HEK293 (cell line): ENCODE measurements at regions of chr1 and their contacts with region 1.

Region 1: DNA sequence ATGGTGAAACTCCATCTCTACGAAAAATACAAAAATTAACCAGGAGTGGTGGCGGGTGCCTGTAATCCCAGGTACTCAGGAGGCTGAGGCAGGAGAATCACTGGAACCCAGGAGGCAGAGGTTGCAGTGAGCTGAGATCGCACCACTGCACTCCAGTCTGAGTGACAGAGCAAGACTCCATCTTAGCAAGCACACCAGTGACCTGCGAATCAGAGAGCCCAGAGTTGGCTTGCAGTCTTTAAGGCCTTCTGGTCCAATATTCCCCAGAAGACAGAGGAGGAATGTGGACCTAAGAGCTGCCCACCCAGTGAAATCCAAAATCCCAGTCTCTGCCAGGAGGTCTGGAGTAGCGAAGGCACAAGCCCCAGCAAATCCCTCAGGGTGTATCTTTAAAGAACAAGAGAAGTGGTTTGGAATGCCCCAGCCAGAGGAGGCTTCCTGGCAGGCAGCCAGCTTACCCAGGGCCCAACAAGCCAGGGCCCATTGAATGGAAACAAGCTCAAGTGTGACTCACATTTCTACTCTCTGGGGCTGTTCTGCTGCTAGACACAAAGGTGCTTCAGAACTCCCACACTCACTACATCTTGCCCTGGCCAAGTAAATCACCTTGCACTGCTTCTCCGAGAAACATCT is 23.9 kb downstream of the GPR161 start:
- H3K4me3 ChIP-seq: no peak overlapping the region
- H3K27ac ChIP-seq: peak overlapping the region; percentile 4
- H3K4me1 ChIP-seq: peaks cover 3% of the 10 kb centered on the region; the same call in 1 of the 2 replicates
- CTCF ChIP-seq: no peak

Region 2: DNA sequence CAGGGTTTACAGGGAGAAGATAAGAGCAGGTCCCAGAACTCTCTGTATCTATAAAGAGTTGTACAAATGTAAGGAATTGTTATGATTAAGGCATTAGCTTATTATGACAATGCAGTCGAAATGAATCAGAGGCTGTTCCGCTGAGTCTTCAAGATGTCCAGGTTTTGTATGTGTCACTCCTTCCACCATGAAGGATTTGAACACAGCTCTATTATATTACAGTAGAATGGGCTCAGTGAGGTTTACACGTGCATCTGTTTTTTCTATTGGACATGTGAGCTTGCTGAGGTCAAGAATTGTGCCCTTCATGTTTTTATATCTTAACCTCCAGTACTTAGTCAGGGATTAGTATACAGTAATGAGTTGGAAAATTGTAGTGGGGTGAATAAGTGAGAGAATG is 304.7 kb before region 1 on chr1:
- CTCF ChIA-PET with region 1: no interaction called
- POLR2A ChIA-PET with region 1: no interaction called
- H3K4me3 ChIP-seq: no peak overlapping the region
- H3K27ac ChIP-seq: no peak overlapping the region
- H3K4me1 ChIP-seq: no peaks in the 10 kb centered on the region
- CTCF ChIP-seq: no peak

Region 3: DNA sequence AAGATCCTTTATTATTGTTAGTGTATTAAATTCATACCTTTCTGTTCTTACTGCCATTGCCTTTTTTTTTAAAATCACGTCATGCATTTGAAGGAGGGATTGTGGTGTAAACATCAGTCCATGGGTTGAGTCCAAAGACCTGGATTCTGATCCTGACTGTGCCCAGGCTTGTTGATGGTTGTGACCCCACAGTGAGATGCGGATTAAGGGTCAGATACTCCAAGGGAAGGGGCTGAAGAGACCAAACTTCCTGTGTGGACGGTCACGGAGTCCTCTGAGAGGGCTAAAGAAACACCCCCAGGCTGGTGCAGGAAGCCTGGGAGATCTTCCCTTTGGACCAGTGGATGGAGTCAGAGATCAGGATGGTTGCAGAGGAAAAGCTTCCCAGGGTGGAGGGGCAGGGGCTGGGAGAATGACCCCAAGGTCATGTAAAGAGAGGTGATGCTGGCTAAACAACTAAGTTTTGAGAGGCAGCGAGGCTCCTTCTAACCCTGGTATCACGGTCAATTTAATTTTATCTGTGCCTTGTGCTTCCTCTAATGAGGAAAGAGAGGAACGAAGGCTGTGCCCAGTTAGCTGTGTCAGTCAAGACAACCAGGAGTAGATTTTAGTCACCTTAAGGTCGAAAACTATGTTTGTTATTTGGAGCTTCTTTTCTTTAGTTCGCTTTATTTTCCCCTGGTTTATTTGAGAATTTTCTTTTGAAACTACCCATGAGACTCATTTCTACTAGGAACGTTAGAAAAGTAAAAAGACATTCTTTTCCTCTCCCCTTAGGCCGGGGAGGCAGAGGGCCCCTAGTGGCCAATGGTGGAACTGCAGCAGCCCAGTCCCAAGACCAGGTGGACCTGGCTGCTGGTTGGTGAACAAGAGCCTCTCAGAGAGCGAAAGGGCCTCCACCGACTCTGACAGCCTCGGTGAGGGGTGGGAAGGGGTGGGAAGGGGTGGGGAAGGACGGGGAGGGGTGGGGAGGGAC is 32.7 kb after region 1 on chr1:
- CTCF ChIA-PET with region 1: interaction called, 11 read pairs
- POLR2A ChIA-PET with region 1: no interaction called
- H3K4me3 ChIP-seq: no peak overlapping the region
- H3K27ac ChIP-seq: no peak overlapping the region
- H3K4me1 ChIP-seq: peaks cover 4% of the 10 kb centered on the region
- CTCF ChIP-seq: no peak; the same call in 1 of the 2 replicates